ENCODE measurements at regions of chr16 and their contacts with region 1.

Region 1: DNA sequence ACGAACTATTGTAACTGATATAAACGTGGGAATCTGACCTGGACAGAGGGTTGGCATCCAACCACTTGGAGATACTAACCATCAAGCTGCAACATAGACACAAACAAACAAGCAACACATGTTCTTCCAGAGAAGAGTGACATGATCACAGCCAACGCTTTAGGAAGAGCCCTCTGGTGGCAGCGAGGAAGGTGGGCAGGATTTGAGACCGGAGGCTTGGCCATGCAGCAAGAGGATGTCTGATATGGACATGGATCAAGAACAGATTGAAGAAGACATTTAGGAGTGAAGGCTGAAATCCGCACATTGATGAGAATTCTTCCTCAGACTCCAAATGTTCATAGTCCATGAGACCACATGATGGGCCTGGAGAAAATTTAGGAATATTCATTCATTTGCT is 40.3 kb upstream of the TNRC6A start:
- DNase-seq: no peak
- H3K4me3 ChIP-seq: no peak overlapping the region
- H3K27me3 ChIP-seq: no peaks in the 10 kb centered on the region
- CTCF ChIP-seq: peak; percentile 84

Region 2: GRCh38 chr16:24357511-24357910 is 331.6 kb before region 1 on chr16:
- CTCF ChIA-PET with region 1: no interaction called
- POLR2A ChIA-PET with region 1: no interaction called
- DNase-seq: no peak
- H3K4me3 ChIP-seq: no peak overlapping the region
- H3K27me3 ChIP-seq: no peaks in the 10 kb centered on the region
- CTCF ChIP-seq: no peak

Region 3: GRCh38 chr16:24440306-24440705 is 248.8 kb before region 1 on chr16:
- CTCF ChIA-PET with region 1: no interaction called
- POLR2A ChIA-PET with region 1: no interaction called
- DNase-seq: no peak
- H3K4me3 ChIP-seq: no peak overlapping the region
- H3K27me3 ChIP-seq: no peaks in the 10 kb centered on the region
- CTCF ChIP-seq: no peak

Region 4: DNA sequence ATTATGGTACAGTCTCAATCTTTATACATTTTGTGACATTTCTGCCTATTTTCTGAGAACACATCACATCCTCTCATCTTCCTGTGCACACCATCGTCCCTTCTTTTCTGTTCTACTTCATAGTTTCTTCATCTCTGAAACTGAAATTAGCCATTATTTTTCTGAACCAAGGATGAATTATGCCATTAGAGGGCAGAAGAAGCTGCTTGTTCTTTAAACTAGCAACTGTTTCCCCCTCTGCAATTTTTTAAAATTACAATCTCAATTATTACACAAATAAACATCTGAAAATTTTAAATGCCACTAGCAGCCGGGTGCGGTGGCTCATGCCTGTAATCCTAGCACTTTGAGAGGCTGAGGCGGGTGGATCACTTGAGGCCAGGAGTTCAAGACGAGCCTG is 108.5 kb before region 1 on chr16:
- CTCF ChIA-PET with region 1: interaction called, 16 read pairs
- POLR2A ChIA-PET with region 1: no interaction called
- DNase-seq: no peak
- H3K4me3 ChIP-seq: no peak overlapping the region
- H3K27me3 ChIP-seq: no peaks in the 10 kb centered on the region
- CTCF ChIP-seq: peak; percentile 56